Ascending aorta (tissue), 2 donors: ENCODE measurements at regions of chr14 and their contacts with region 1.

Region 1: GRCh38 chr14:75234173-75235115 is 44.2 kb upstream of the FOS start:
- DNase-seq: peak; percentile 48 to 85
- H3K4me3 ChIP-seq: no peak overlapping the region
- H3K27ac ChIP-seq: peak overlapping the region; percentile 74 to 81
- H3K4me1 ChIP-seq: peaks cover 11 to 27% of the 10 kb centered on the region in 2 donors
- H3K27me3 ChIP-seq: no peaks in the 10 kb centered on the region
- CTCF ChIP-seq: no peak

Region 2: DNA sequence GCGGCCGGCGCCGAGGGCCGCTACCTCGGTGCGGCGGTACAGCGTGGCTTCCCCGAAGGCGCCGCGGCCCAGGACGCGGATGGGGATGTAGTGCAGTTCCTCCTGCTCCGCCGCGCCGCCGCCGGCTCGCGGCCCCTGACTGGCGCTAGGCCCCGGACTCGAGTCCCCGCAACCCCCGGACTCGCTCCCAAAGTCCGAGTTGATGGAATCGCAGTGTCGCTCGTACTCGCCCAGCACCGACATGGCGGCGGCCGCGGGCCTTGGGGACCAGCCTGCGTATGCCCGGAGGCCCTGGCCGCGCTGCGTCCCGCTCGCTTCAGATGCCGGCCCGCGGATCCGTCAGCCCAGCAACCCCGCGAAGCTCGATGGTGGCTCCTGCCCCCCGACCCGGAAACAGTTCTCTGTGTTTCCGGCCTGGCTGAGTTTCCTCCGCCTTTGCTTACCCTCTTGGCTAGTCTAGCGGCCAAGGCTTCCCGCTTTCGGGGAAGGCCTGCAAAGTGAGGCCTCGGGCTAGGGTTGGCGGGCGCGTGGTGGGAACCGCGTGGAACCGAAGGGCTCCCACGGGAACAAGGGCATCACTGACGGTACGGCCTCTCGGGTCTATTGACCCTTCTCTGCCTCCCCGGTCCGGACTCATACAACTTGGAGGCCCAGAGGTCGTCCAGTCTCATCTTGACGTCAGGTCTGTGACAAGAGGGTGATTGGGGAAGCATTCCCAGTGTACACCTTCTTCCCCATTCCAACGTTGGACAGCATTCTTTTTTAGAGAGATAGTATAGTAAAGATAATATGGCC is 107.6 kb before region 1 on chr14 and contains the start of gene NEK9:
- intact Hi-C with region 1: loop called (anchors 2 kb)
- DNase-seq: peak; percentile 36 to 94
- H3K4me3 ChIP-seq: peak within 1 kb of the TSS; percentile 67 to 89
- H3K27ac ChIP-seq: peak within 1 kb of the TSS; percentile 90 to 99
- H3K4me1 ChIP-seq: peaks cover 6 to 18% of the 10 kb centered on the region in 2 donors
- H3K27me3 ChIP-seq: no peaks in the 10 kb centered on the region
- CTCF ChIP-seq: no peak
- total RNA-seq, gene NEK9: 116 TPM

Region 3: GRCh38 chr14:75182841-75183624 is 51.4 kb before region 1 on chr14:
- intact Hi-C with region 1: loop called (anchors 2 kb)
- DNase-seq: peak in 1 of 2 donors; percentile 79
- H3K4me3 ChIP-seq: no peak overlapping the region
- H3K27ac ChIP-seq: peak overlapping the region; percentile 86 to 94
- H3K4me1 ChIP-seq: peaks cover 17 to 38% of the 10 kb centered on the region in 2 donors
- H3K27me3 ChIP-seq: no peaks in the 10 kb centered on the region
- CTCF ChIP-seq: no peak

Region 4: GRCh38 chr14:75247286-75247922 is 13.0 kb after region 1 on chr14:
- intact Hi-C with region 1: no loop called
- DNase-seq: no peak
- H3K4me3 ChIP-seq: no peak overlapping the region
- H3K27ac ChIP-seq: no peak overlapping the region
- H3K4me1 ChIP-seq: peaks cover 0 to 4% of the 10 kb centered on the region in 2 donors
- H3K27me3 ChIP-seq: no peaks in the 10 kb centered on the region
- CTCF ChIP-seq: no peak

Region 5: GRCh38 chr14:75258615-75259466 is 24.4 kb after region 1 on chr14:
- intact Hi-C with region 1: loop called (anchors 1 kb)
- DNase-seq: peak; percentile 97 to 100
- H3K4me3 ChIP-seq: peak overlapping the region; percentile 46 to 62
- H3K27ac ChIP-seq: peak overlapping the region; percentile 93 to 97
- H3K4me1 ChIP-seq: peaks cover 0 to 32% of the 10 kb centered on the region in 2 donors
- H3K27me3 ChIP-seq: no peaks in the 10 kb centered on the region
- CTCF ChIP-seq: no peak

Region 6: GRCh38 chr14:75293920-75294642 is 59.6 kb after region 1 on chr14:
- intact Hi-C with region 1: loop called (anchors 1 kb)
- DNase-seq: peak; percentile 88 to 98
- H3K4me3 ChIP-seq: peak overlapping the region; percentile 73 to 78
- H3K27ac ChIP-seq: peak overlapping the region; percentile 93 to 96
- H3K4me1 ChIP-seq: peaks cover 10 to 13% of the 10 kb centered on the region in 2 donors
- H3K27me3 ChIP-seq: no peaks in the 10 kb centered on the region
- CTCF ChIP-seq: peak in 1 of 3 experiments; percentile 2